Activated T-helper 1 cell treated with anti-CD3 and anti-CD28 coated beads, Interleukin-12 subunit alpha, Interleukin-12 subunit beta, Interleukin-2, Interleukin-4 antibody, amounts not matched to agents 30 ng/mL and 10 ng/mL and 1 ng/mL, durations not matched to agents 14 hours and 24 hours and 36 hours (primary cell): ENCODE measurements at regions of chr4 and their contacts with region 1.

Region 1: DNA sequence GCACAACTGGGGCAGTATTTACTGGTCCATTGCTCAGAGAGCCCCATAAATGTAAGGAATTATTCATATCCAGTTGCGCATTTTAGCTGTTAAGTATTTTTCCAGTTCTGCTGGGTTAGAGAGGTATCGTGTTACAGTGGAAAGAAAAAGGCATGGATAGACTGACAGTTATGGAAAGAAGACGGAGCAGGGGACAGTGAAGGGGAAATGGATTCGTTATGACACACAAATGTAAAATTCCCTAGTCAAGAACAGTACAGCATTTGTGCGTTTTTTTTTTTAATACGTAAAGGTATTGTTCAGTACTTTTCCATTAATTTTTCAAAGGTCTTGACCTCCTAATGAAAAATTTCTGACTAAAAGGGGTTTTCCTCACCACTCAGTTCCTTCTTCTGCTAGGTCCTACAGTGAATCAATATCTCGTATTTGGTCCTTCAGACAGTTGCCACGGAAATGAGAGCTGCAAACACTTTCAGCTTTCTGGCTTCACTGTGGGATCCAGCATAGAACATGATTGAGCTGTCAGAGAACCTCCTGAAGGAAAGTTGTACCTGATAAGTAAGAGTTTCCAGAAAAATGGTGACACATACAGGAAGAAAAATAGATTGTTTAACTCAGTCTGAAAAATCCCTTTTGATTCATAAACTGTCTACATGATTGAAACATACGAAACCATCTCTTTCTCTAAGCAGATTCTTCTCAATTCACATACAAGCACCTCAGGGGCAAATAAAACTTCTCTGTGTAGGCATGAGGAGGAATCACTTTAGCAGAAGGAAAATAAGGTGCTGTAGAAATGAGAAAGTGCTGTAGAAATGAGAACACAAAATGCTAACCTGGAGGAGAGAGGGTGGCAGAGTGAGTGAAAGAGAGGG is 21.8 kb upstream of the BBS12 start:
- DNase-seq: peak; percentile 31
- H3K4me3 Mint-ChIP-seq: peak overlapping the region; percentile 67
- H3K27ac Mint-ChIP-seq: peak overlapping the region; percentile 97
- H3K4me1 Mint-ChIP-seq: peaks cover 83% of the 10 kb centered on the region
- H3K27me3 Mint-ChIP-seq: peaks cover 2% of the 10 kb centered on the region

Region 2: DNA sequence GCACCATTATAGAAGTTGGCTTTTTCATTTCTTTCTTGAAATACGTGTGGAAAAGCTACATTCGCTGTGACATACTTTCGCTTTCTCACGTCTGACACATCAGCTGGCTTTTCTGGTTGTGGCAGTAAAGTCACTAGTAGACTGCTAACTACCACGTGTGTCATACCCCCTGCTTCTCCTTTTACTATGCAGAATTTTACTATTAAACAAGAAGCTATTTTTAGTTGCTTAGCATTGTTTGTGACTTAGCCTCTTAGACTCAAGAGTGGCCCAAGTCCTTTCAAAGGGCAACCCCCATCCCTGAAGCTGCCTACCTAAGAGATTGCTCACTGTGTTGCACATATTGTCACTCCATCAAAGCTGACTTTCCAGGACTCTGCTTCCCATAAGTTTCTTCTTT is 252.0 kb before region 1 on chr4:
- intact Hi-C with region 1: loop called (anchors 2 kb)
- DNase-seq: peak; percentile 29
- H3K4me3 Mint-ChIP-seq: peak overlapping the region; percentile 76
- H3K27ac Mint-ChIP-seq: peak overlapping the region; percentile 87
- H3K4me1 Mint-ChIP-seq: peaks cover 46% of the 10 kb centered on the region
- H3K27me3 Mint-ChIP-seq: no peaks in the 10 kb centered on the region

Region 3: GRCh38 chr4:122542411-122543236 is 168.0 kb before region 1 on chr4:
- intact Hi-C with region 1: loop called (anchors 1 kb)
- DNase-seq: no peak
- H3K4me3 Mint-ChIP-seq: peak overlapping the region; percentile 71
- H3K27ac Mint-ChIP-seq: peak overlapping the region; percentile 93
- H3K4me1 Mint-ChIP-seq: peaks cover 85% of the 10 kb centered on the region
- H3K27me3 Mint-ChIP-seq: no peaks in the 10 kb centered on the region

Region 4: GRCh38 chr4:122658818-122659295 is 51.8 kb before region 1 on chr4:
- intact Hi-C with region 1: loop called (anchors 1 kb)
- DNase-seq: no peak
- H3K4me3 Mint-ChIP-seq: peak overlapping the region; percentile 66
- H3K27ac Mint-ChIP-seq: peak overlapping the region; percentile 94
- H3K4me1 Mint-ChIP-seq: peaks cover 59% of the 10 kb centered on the region
- H3K27me3 Mint-ChIP-seq: no peaks in the 10 kb centered on the region

Region 5: GRCh38 chr4:122689972-122690371 is 20.7 kb before region 1 on chr4:
- intact Hi-C with region 1: loop called (anchors 1 kb)
- DNase-seq: peak; percentile 22
- H3K4me3 Mint-ChIP-seq: peak overlapping the region; percentile 43
- H3K27ac Mint-ChIP-seq: peak overlapping the region; percentile 71
- H3K4me1 Mint-ChIP-seq: peaks cover 66% of the 10 kb centered on the region
- H3K27me3 Mint-ChIP-seq: no peaks in the 10 kb centered on the region

Region 6: GRCh38 chr4:122814426-122814825 is 103.8 kb after region 1 on chr4:
- intact Hi-C with region 1: loop called (anchors 2 kb)
- DNase-seq: no peak
- H3K4me3 Mint-ChIP-seq: no peak overlapping the region
- H3K27ac Mint-ChIP-seq: peak overlapping the region; percentile 38
- H3K4me1 Mint-ChIP-seq: peaks cover 12% of the 10 kb centered on the region
- H3K27me3 Mint-ChIP-seq: peaks cover 16% of the 10 kb centered on the region